T-cell (primary cell): ENCODE measurements at regions of chr3 and their contacts with region 1.

Region 1: DNA sequence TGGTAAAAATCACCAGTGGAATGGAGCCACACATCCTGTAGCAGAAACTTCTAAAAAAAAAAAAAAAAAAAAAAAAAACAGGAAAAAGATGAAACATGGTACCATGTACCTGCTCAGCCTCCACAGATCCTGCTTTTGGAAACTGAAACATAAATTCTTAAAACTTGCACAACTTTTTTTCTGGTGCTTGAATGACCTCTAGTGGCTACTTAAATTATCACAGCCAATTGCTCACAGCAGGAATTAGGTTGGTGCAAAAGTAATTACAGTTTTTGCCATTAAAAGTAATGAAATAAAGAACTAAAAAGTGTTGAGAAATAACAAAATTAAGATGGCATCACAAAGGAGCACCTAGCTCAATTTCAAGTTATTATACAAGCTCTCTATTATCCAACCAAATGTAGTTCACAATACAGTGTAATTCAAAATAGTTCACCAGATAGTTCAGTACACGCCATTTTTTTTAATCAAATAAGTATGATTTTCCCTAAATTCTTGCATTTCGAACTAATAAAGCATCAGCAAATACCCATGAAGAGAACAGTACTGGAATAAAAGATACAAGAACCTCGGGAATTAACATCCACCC is 80.6 kb downstream of the ULK4 start:
- DNase-seq: peak in 4 of 35 experiments; percentile 4 to 66 (median 20)
- ATAC-seq: no peak
- H3K4me3 ChIP-seq: no peak overlapping the region
- H3K4me3 Mint-ChIP-seq: no peak overlapping the region
- H3K27ac ChIP-seq: no peak overlapping the region
- H3K27ac Mint-ChIP-seq: peak overlapping the region in 1 of 2 donors; percentile 44
- H3K4me1 ChIP-seq: no peaks in the 10 kb centered on the region
- H3K4me1 Mint-ChIP-seq: no peaks in the 10 kb centered on the region
- H3K27me3 ChIP-seq: no peaks in the 10 kb centered on the region
- H3K27me3 Mint-ChIP-seq: no peaks in the 10 kb centered on the region

Region 2: DNA sequence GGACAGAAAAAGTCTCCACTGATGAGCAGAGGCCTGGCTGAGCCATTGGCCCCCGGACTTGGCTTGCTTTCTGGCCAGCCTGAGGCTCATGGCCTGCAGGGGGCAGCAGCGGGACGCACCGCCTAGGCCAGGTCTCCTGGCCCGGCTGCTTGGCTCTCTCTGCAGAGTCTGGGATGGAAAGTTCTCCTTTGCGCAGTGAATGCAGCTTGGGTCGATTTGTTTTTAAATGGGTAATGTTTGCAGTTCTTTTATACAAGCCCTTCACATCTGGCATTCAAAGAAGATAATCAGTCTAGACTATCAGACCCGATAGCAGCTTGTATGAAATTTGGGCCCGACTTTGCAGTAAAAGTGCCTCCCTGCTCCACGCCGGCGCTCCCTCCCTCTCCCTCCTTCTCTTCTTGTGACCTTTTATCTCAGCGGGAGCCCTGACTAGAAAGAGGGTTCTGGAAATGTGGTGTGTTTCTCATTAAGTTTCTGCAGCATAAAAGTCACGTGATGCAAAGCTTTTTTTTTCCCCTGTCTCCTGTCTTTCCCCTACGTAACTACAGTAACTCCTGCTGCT is 1296.6 kb before region 1 on chr3:
- CTCF ChIA-PET with region 1: interaction called, 9 to 19 read pairs
- POLR2A ChIA-PET with region 1: no interaction called
- DNase-seq: peak; percentile 22 to 78 (median 55)
- ATAC-seq: peak; percentile 58 to 72 (median 66)
- H3K4me3 ChIP-seq: no peak overlapping the region
- H3K4me3 Mint-ChIP-seq: no peak overlapping the region
- H3K27ac ChIP-seq: no peak overlapping the region
- H3K27ac Mint-ChIP-seq: no peak overlapping the region
- H3K4me1 ChIP-seq: no peaks in the 10 kb centered on the region
- H3K4me1 Mint-ChIP-seq: no peaks in the 10 kb centered on the region
- H3K27me3 ChIP-seq: peaks cover 0 to 12% of the 10 kb centered on the region in 2 experiments
- H3K27me3 Mint-ChIP-seq: peaks cover 6 to 15% of the 10 kb centered on the region in 2 donors

Region 3: GRCh38 chr3:41716471-41716870 is 164.9 kb before region 1 on chr3:
- CTCF ChIA-PET with region 1: interaction called in 1 of 2 experiments, 15 read pairs
- POLR2A ChIA-PET with region 1: no interaction called
- DNase-seq: no peak
- ATAC-seq: no peak
- H3K4me3 ChIP-seq: no peak overlapping the region
- H3K4me3 Mint-ChIP-seq: no peak overlapping the region
- H3K27ac ChIP-seq: no peak overlapping the region
- H3K27ac Mint-ChIP-seq: no peak overlapping the region
- H3K4me1 ChIP-seq: no peaks in the 10 kb centered on the region
- H3K4me1 Mint-ChIP-seq: no peaks in the 10 kb centered on the region
- H3K27me3 ChIP-seq: no peaks in the 10 kb centered on the region
- H3K27me3 Mint-ChIP-seq: no peaks in the 10 kb centered on the region

Region 4: DNA sequence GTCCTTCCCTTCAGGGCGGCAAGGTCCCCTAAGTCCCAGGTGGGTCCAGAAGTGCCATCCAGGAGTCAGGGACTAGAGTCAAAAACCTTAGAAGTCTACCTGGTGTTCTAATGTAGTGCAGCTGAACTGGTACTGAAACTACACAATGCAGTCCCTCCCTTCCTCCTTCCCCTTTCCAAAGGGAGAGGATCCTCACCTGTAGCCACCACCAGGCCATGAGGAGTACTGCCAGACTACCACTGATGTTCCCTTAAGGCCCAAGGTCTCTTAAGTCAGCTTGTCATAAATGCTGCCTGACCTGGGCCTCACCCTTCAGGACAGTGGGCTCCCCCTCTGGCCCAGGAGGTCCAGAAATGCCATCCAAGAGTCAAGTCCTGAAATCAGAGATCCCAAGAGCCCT is 18.3 kb before region 1 on chr3:
- CTCF ChIA-PET with region 1: no interaction called
- POLR2A ChIA-PET with region 1: no interaction called
- DNase-seq: no peak
- ATAC-seq: no peak
- H3K4me3 ChIP-seq: no peak overlapping the region
- H3K4me3 Mint-ChIP-seq: no peak overlapping the region
- H3K27ac ChIP-seq: no peak overlapping the region
- H3K27ac Mint-ChIP-seq: no peak overlapping the region
- H3K4me1 ChIP-seq: no peaks in the 10 kb centered on the region
- H3K4me1 Mint-ChIP-seq: no peaks in the 10 kb centered on the region
- H3K27me3 ChIP-seq: no peaks in the 10 kb centered on the region
- H3K27me3 Mint-ChIP-seq: no peaks in the 10 kb centered on the region